PC-9 (cell line): ENCODE measurements at regions of chr11 and their contacts with region 1.

Region 1: DNA sequence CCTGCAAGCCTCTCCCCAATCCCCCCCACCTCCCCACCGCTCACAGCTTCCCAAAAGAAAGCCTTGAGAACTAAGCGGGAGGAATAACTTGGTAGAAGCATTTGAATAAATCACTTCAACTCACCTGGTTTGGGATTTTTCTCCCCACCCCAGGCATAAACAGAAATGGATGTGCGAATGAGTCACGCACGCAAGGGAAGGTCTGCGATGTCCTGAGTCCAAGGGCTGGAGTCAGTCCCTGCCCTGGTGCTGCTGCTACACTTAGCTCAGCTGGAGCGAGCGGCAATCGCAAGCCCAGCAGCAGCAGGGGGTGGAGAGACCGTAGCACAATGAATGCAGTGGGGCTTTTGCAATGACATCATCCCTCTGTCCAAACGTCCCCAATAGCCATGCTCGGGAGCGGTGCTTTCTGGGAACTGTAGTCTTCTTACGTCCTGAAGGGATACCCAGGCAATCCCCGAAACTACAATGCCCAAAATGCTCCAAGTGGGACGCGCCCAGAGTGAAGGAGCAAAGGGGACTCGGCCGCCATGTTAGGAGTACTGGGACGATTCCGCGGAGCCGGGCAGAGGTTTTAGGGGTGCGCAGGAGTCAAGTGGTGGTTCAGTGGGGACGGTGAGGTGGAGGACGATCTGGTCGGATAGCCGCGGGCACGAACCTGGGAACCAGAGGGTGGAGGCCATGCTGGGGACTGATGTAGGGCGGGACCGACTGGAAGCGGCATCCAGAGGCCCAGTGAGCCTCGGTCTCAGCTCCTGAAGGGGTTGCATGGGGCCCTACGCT is at the start of gene RAB30:
- DNase-seq: peak; percentile 93 to 100
- H3K4me3 ChIP-seq: peak within 1 kb of the TSS; percentile 91
- H3K27ac ChIP-seq: peak within 1 kb of the TSS; percentile 66
- H3K4me1 ChIP-seq: peaks cover 39% of the 10 kb centered on the region
- H3K27me3 ChIP-seq: no peaks in the 10 kb centered on the region
- CTCF ChIP-seq: no peak
- total RNA-seq, gene RAB30: 3.2 and 3.6 TPM in 2 replicates

Region 2: GRCh38 chr11:82927254-82927880 is 144.4 kb before region 1 on chr11:
- CTCF ChIA-PET with region 1: no interaction called
- POLR2A ChIA-PET with region 1: no interaction called
- intact Hi-C with region 1: loop called (anchors 2 kb)
- DNase-seq: peak; percentile 5 to 60
- H3K4me3 ChIP-seq: no peak overlapping the region
- H3K27ac ChIP-seq: no peak overlapping the region
- H3K4me1 ChIP-seq: no peaks in the 10 kb centered on the region
- H3K27me3 ChIP-seq: no peaks in the 10 kb centered on the region
- CTCF ChIP-seq: peak; percentile 97

Region 3: DNA sequence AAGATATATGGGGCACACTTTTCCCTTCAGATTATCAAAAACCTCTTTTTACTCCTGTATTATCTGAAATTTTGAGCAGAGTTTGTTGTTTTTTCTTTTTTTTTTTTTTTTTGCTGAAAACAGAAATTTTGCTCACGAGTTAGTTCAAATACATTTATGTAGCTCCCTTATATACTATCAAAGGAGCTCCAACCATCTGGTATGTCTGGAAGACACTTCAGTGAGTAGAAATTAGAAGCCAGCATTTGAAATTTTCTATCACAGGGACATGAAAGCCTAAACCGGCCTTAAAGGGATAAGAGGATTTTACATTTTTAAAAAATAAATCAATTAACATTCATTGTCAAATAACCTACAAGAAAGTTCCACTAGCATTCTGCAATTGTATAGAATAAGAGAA is 96.9 kb before region 1 on chr11:
- CTCF ChIA-PET with region 1: no interaction called
- POLR2A ChIA-PET with region 1: interaction called, 12 read pairs
- intact Hi-C with region 1: loop called (anchors 5 kb)
- DNase-seq: no peak
- H3K4me3 ChIP-seq: no peak overlapping the region
- H3K27ac ChIP-seq: no peak overlapping the region
- H3K4me1 ChIP-seq: no peaks in the 10 kb centered on the region
- H3K27me3 ChIP-seq: no peaks in the 10 kb centered on the region
- CTCF ChIP-seq: no peak

Region 4: DNA sequence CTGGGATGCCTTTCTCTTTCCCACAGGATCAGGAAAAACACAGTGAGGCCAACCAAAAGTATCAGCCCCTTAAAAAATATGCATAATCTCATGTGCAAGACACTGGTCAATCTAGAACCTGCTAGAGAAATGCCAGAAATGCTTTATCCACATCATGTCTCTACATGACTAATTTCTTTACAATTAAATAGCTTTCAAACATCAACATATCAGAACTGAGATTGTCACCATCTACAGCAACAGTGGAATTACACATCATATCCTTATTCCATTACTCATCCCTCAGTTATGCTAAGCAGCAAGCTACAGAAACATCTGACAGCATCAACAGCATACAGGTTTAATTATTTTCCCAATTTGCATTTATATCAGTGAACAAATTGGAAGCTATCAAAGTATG is 91.5 kb before region 1 on chr11:
- CTCF ChIA-PET with region 1: no interaction called
- POLR2A ChIA-PET with region 1: interaction called, 12 read pairs
- intact Hi-C with region 1: loop called (anchors 5 kb)
- DNase-seq: peak in 1 of 2 experiments; percentile 77
- H3K4me3 ChIP-seq: no peak overlapping the region
- H3K27ac ChIP-seq: no peak overlapping the region
- H3K4me1 ChIP-seq: no peaks in the 10 kb centered on the region
- H3K27me3 ChIP-seq: no peaks in the 10 kb centered on the region
- CTCF ChIP-seq: no peak

Region 5: DNA sequence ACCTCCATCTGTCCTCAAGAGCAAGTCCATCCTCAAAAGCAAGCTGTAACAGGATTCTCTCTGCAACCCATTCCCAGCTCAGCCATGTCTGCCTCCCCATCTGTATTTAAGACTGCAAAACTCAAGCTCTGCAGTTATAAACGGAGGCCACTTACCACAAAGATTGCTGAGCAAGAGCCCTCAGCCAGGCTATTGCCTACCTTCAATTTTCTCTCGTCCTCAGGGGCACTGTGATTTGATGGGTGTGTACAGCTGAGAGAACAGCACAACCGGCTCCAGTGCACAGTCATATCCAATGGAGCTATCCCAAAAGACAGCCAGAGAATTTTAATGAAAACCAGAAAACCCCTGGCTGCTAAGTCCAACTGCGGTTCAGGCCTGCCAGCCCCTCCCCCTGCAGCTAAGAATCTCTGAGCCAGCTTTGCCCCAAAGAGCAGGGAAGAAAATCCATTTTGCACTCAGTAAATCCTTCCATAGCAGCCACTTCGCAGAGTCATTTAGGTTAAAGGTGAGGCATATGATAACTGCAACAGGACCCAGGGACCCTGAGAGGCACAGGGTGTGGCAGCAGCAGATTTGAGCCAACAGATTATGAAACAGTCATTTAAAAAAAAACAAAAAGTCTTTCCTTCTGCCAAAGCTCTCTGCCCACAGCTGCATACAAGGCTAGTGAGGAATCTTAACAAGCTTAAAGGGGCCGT is 37.6 kb before region 1 on chr11:
- CTCF ChIA-PET with region 1: no interaction called
- POLR2A ChIA-PET with region 1: interaction called, 3 read pairs
- intact Hi-C with region 1: loop called (anchors 1 kb)
- DNase-seq: peak; percentile 51 to 79
- H3K4me3 ChIP-seq: no peak overlapping the region; the same call in 1 of the 2 replicates
- H3K27ac ChIP-seq: peak overlapping the region; percentile 41
- H3K4me1 ChIP-seq: peaks cover 23% of the 10 kb centered on the region
- H3K27me3 ChIP-seq: no peaks in the 10 kb centered on the region
- CTCF ChIP-seq: no peak

Region 6: GRCh38 chr11:83193315-83194280 is 121.8 kb after region 1 on chr11 and contains the start of gene ANKRD42:
- CTCF ChIA-PET with region 1: no interaction called
- POLR2A ChIA-PET with region 1: interaction called, 5 read pairs
- intact Hi-C with region 1: loop called (anchors 1 kb)
- DNase-seq: peak; percentile 87 to 96
- H3K4me3 ChIP-seq: peak within 1 kb of the TSS; percentile 72
- H3K27ac ChIP-seq: peak within 1 kb of the TSS; percentile 42
- H3K4me1 ChIP-seq: peaks cover 32% of the 10 kb centered on the region
- H3K27me3 ChIP-seq: no peaks in the 10 kb centered on the region
- CTCF ChIP-seq: no peak
- total RNA-seq, gene ANKRD42: 6.8 and 10.4 TPM in 2 replicates

Region 7: GRCh38 chr11:83285771-83286528 is 214.2 kb after region 1 on chr11 and contains the start of gene CCDC90B:
- CTCF ChIA-PET with region 1: no interaction called
- POLR2A ChIA-PET with region 1: no interaction called
- intact Hi-C with region 1: loop called (anchors 10 kb)
- DNase-seq: peak; percentile 91 to 97
- H3K4me3 ChIP-seq: peak within 1 kb of the TSS; percentile 75
- H3K27ac ChIP-seq: peak within 1 kb of the TSS; percentile 82
- H3K4me1 ChIP-seq: peaks cover 16% of the 10 kb centered on the region
- H3K27me3 ChIP-seq: no peaks in the 10 kb centered on the region
- CTCF ChIP-seq: no peak
- total RNA-seq, gene CCDC90B: 32.2 and 36.6 TPM in 2 replicates